ENCODE measurements at regions of chr10 and their contacts with region 1.

Region 1: GRCh38 chr10:62038609-62039190 is 137.2 kb downstream of the ARID5B start:
- DNase-seq: peak; percentile 40 to 84 (median 69)
- ATAC-seq: peak; percentile 87
- H3K4me3 ChIP-seq: peak overlapping the region; percentile 37
- H3K4me3 Mint-ChIP-seq: peak overlapping the region; percentile 64 to 87 (median 72)
- H3K27ac ChIP-seq: peak overlapping the region; percentile 60
- H3K27ac Mint-ChIP-seq: peak overlapping the region; percentile 20 to 94 (median 74)
- H3K4me1 ChIP-seq: peaks cover 16 to 56% of the 10 kb centered on the region in 2 donors
- H3K4me1 Mint-ChIP-seq: peaks cover 48 to 92% (median 86%) of the 10 kb centered on the region in 7 donors
- H3K27me3 ChIP-seq: no peaks in the 10 kb centered on the region
- H3K27me3 Mint-ChIP-seq: no peaks in the 10 kb centered on the region

Region 2: GRCh38 chr10:61896854-61897661 is 141.6 kb before region 1 on chr10:
- CTCF ChIA-PET with region 1: interaction called, 66 read pairs
- POLR2A ChIA-PET with region 1: interaction called, 51 read pairs
- intact Hi-C with region 1: loop called (anchors 1 to 2 kb)
- DNase-seq: peak; percentile 20 to 76 (median 66)
- ATAC-seq: peak; percentile 80
- H3K4me3 ChIP-seq: peak overlapping the region; percentile 51
- H3K4me3 Mint-ChIP-seq: peak overlapping the region; percentile 77 to 98 (median 86)
- H3K27ac ChIP-seq: no peak overlapping the region
- H3K27ac Mint-ChIP-seq: peak overlapping the region; percentile 46 to 99 (median 86)
- H3K4me1 ChIP-seq: peaks cover 18 to 27% of the 10 kb centered on the region in 2 donors
- H3K4me1 Mint-ChIP-seq: peaks cover 12 to 35% (median 33%) of the 10 kb centered on the region in 7 donors
- H3K27me3 ChIP-seq: no peaks in the 10 kb centered on the region
- H3K27me3 Mint-ChIP-seq: no peaks in the 10 kb centered on the region

Region 3: GRCh38 chr10:62050893-62051433 is 12.3 kb after region 1 on chr10:
- CTCF ChIA-PET with region 1: interaction called, 47 read pairs
- POLR2A ChIA-PET with region 1: interaction called, 38 read pairs
- intact Hi-C with region 1: loop called (anchors 1 kb)
- DNase-seq: peak; percentile 25 to 88 (median 78)
- ATAC-seq: peak; percentile 86
- H3K4me3 ChIP-seq: peak overlapping the region; percentile 62
- H3K4me3 Mint-ChIP-seq: peak overlapping the region; percentile 81 to 94 (median 88)
- H3K27ac ChIP-seq: peak overlapping the region; percentile 77
- H3K27ac Mint-ChIP-seq: peak overlapping the region; percentile 91 to 100 (median 96)
- H3K4me1 ChIP-seq: peaks cover 59 to 63% of the 10 kb centered on the region in 2 donors
- H3K4me1 Mint-ChIP-seq: peaks cover 60 to 99% (median 96%) of the 10 kb centered on the region in 7 donors
- H3K27me3 ChIP-seq: no peaks in the 10 kb centered on the region
- H3K27me3 Mint-ChIP-seq: no peaks in the 10 kb centered on the region

Region 4: DNA sequence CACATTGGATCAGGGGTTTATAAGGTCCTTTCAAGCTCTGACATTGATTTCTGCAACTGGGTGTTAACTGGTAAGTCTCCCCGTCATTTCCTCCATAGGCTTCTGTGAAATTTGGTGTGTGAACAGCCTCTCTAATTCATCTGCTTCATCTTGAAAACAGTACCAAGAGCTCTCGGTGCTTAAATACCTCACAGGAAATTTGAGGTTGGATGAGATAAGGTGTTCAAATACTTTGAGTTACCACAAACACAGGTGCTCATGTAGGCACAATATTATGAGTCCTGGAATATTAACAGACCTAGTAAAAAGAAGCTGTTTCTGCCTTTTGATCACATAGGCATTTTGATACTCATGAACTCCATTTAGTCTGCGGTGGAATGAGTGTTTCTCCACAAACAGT is 144.7 kb after region 1 on chr10:
- CTCF ChIA-PET with region 1: interaction called, 16 read pairs
- POLR2A ChIA-PET with region 1: interaction called, 10 read pairs
- intact Hi-C with region 1: loop called (anchors 1 to 2 kb)
- DNase-seq: peak in 8 of 9 donors; percentile 45 to 95 (median 90)
- ATAC-seq: peak; percentile 96
- H3K4me3 ChIP-seq: no peak overlapping the region
- H3K4me3 Mint-ChIP-seq: peak overlapping the region; percentile 10 to 77 (median 62)
- H3K27ac ChIP-seq: peak overlapping the region; percentile 74
- H3K27ac Mint-ChIP-seq: peak overlapping the region; percentile 84 to 98 (median 93)
- H3K4me1 ChIP-seq: peaks cover 36 to 67% of the 10 kb centered on the region in 2 donors
- H3K4me1 Mint-ChIP-seq: peaks cover 28 to 99% (median 87%) of the 10 kb centered on the region in 7 donors
- H3K27me3 ChIP-seq: no peaks in the 10 kb centered on the region
- H3K27me3 Mint-ChIP-seq: no peaks in the 10 kb centered on the region

Region 5: GRCh38 chr10:62422068-62422590 is 383.4 kb after region 1 on chr10:
- CTCF ChIA-PET with region 1: interaction called, 3 read pairs
- POLR2A ChIA-PET with region 1: no interaction called
- intact Hi-C with region 1: loop called in 1 of 2 experiments (anchors 5 kb)
- DNase-seq: no peak
- ATAC-seq: no peak
- H3K4me3 ChIP-seq: no peak overlapping the region
- H3K4me3 Mint-ChIP-seq: no peak overlapping the region
- H3K27ac ChIP-seq: no peak overlapping the region
- H3K27ac Mint-ChIP-seq: no peak overlapping the region
- H3K4me1 ChIP-seq: no peaks in the 10 kb centered on the region
- H3K4me1 Mint-ChIP-seq: peaks cover 0 to 2% (median 0%) of the 10 kb centered on the region in 7 donors
- H3K27me3 ChIP-seq: no peaks in the 10 kb centered on the region
- H3K27me3 Mint-ChIP-seq: peaks cover 9 to 18% (median 10%) of the 10 kb centered on the region in 5 donors

Measured in naive thymus-derived CD4-positive, alpha-beta T cell (primary cell).